Activated T-helper 2 cell treated with anti-CD3 and anti-CD28 coated beads, Interferon-gamma antibody, Interleukin-2, Interleukin-4, amounts not matched to agents 10 μg/mL and 5 μg/mL and 100 μg/mL, durations not matched to agents 14 hours and 24 hours and 36 hours (primary cell): ENCODE measurements at regions of chr13 and their contacts with region 1.

Region 1: DNA sequence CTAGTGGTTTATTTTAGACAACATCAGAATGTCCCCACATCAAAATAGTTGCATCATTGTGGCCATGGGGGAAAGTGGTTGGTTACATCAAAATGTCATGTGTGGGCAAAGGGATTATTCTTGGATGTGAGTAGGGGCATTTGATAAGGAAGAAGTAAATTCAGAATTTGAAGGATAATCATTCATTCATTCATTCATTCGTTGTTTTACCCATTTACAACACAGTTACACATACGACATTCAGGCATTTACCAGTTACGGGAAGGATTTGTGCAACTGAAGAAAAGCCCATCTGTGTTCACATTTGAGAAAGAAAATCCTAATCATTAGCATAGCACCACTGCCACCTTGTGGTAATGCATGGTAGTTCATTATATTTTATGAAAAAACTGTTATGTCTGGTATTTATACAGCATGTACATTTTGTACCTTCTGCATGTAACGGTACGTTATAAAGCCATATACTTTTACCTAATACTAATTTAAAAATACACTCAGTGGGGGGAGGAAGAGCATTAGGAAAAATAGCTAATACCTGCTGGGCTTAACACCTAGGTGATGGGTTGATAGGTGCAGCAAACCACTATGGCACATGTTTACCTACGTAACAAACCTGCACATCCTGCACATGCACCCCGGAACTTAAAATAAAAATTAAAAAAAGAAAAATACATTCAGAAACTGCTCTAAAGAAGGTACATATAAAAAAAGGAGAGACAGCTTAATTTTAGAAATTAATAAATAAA is 62.1 kb downstream of the DGKH start:
- DNase-seq: no peak
- H3K4me3 Mint-ChIP-seq: no peak overlapping the region
- H3K27ac Mint-ChIP-seq: no peak overlapping the region
- H3K4me1 Mint-ChIP-seq: peaks cover 15% of the 10 kb centered on the region
- H3K27me3 Mint-ChIP-seq: no peaks in the 10 kb centered on the region

Region 2: DNA sequence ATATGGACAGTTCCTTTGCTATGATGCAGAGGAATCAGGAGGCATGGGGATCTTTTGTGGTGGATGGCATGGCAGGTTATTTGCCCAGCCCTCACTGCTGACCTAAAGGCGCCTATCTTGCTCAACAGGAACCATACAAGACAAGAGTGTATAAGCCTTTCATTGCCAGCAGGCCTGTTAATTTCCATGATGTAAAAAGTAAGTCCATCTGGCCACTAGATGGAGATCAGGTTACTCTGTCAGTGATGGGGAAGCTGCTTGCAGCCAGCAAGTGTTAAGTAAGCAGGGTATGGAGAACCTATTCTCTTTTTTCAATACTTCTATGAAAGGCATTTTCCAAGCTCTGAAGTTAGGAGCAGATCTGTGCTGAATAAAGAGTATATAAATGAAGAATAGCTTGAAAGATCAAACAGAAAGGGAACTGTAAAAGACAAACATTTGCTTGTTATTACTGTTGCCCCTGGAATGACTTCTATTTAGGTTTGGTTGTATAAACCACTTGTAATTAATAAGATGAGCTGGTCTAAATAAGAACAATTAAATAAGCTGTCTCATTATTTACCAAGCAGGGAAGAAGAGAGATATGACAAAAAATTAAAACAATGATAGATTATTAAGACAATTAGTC is 442.3 kb before region 1 on chr13:
- intact Hi-C with region 1: loop called (anchors 1 kb)
- DNase-seq: peak; percentile 26
- H3K4me3 Mint-ChIP-seq: no peak overlapping the region
- H3K27ac Mint-ChIP-seq: no peak overlapping the region
- H3K4me1 Mint-ChIP-seq: peaks cover 8% of the 10 kb centered on the region
- H3K27me3 Mint-ChIP-seq: no peaks in the 10 kb centered on the region

Region 3: GRCh38 chr13:42405665-42406390 is 295.2 kb after region 1 on chr13:
- intact Hi-C with region 1: no loop called
- DNase-seq: no peak
- H3K4me3 Mint-ChIP-seq: peak overlapping the region; percentile 62
- H3K27ac Mint-ChIP-seq: peak overlapping the region; percentile 96
- H3K4me1 Mint-ChIP-seq: peaks cover 68% of the 10 kb centered on the region
- H3K27me3 Mint-ChIP-seq: no peaks in the 10 kb centered on the region